Caco-2 (cell line): ENCODE measurements at regions of chr7 and their contacts with region 1.

Region 1: DNA sequence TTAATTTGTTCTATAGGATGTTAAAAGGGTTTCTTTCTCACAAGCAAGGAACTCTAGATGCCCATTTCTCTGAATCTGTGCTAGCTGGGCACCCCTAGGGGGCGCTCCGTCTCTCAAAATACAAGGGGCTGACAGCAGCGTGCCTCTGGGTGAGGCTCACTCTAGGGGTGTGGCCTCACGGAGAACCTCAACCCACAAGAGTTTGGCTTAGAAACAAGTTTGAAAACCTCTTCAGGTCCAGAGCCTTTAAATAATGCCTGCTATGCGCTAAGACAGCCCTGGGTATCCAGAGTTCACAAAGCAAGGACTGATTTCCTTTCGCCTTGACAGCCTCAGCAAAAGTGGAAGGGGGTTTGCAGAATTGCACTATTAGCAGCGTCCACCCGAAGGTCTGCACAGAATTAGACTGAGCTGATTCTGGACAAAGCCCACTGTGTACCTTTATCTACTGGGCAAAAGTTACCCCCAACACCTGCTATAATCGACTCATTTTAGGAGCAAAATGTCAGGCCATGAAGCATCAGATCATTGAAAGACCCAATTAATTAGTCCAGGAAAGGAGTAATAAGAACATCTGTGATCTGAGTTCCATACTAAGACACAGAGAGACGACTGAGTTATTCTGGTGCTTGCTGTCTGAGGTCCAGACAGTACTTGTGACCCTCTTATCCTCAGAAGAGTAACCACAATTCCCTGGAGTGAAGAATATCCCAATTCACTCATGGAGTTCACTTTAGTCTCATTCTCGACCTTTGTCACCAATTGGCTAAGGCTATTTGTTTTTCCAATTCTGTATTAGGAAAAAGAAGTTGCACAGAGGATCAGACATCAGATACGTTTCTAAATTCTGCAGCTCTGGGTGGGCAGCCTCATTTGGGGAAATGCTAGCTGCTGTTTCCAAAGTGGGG is 574 bp upstream of the CPED1 start:
- DNase-seq: peak; percentile 80 to 85
- H3K4me3 ChIP-seq: peak overlapping the region; percentile 20
- H3K4me3 Mint-ChIP-seq: peak overlapping the region; percentile 90
- H3K27ac Mint-ChIP-seq: no peak overlapping the region
- H3K4me1 ChIP-seq: peaks cover 10% of the 10 kb centered on the region
- H3K4me1 Mint-ChIP-seq: peaks cover 16% of the 10 kb centered on the region
- H3K27me3 ChIP-seq: 0 out of 2 replicates have a peak, but pooled peaks cover 2% of the 10 kb centered on the region
- H3K27me3 Mint-ChIP-seq: peaks cover 6% of the 10 kb centered on the region
- CTCF ChIP-seq: peak; percentile 97

Region 2: DNA sequence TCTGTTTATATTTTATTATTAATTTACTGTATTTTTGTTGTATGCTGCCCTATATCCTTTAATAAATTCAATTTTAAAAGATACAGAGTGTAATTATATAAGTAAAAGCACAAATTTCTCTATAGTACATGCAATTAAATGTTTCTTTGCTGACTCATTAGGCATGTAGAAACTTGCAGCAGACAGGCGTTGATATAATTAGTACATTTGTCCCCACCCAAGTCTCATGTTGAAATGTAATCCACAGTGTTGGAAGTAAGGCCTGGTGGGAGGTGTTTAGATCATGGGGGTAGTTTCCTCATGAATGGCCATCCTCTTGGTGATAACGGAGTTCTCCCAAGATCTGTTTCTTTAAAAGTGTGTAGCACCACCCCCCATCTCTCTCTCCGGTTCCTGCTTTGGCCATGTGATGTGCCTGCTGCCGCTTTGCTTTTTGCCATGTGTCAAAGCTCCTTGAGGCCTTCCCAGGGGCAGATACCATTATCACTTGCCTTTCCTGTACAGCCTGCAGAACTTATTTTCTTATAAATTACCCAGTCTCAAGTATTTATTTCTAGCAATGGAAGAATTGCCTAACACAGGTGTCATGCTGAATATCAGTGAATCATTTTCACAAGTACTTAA is 193.7 kb before region 1 on chr7:
- CTCF ChIA-PET with region 1: no interaction called
- POLR2A ChIA-PET with region 1: no interaction called
- intact Hi-C with region 1: no loop called
- DNase-seq: no peak
- H3K4me3 ChIP-seq: no peak overlapping the region
- H3K4me3 Mint-ChIP-seq: no peak overlapping the region
- H3K27ac Mint-ChIP-seq: no peak overlapping the region
- H3K4me1 ChIP-seq: no peaks in the 10 kb centered on the region
- H3K4me1 Mint-ChIP-seq: no peaks in the 10 kb centered on the region
- H3K27me3 ChIP-seq: no peaks in the 10 kb centered on the region
- H3K27me3 Mint-ChIP-seq: peaks cover 4% of the 10 kb centered on the region
- CTCF ChIP-seq: no peak

Region 3: DNA sequence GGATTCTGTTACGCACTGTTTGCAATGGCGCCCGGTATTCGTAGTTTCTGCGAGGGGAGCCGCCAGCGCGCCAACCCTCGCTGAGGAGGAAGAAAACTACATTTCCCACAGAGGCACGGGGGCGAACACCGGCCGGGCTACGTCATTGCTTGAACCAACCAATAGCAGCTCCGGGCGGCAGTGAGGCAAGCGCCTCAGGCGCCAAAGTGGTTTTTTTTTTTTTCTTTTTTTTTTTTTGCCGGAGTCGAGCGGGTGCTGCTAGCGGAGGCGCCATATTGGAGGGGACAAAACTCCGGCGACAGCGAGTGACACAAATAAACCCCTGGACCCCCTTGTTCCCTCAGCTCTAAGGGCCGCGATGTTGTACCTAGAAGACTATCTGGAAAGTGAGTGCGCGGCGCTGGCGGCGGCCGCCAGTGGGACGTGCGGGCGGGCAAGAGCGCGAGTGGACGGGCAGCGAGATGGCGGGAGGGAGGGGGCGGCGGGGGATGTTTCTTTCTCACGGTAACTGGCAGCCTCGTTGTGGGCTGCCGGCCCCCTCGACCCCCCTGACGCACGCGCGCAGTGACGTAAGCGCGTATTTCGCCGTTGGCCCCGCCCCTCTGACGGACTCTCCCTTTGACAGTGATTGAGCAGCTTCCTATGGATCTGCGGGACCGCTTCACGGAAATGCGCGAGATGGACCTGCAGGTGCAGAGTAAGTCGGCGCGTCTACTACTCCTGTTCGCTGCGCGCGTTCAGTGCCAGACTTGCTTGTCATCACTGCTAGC is 37.2 kb before region 1 on chr7 and contains the start of gene ING3:
- CTCF ChIA-PET with region 1: no interaction called
- POLR2A ChIA-PET with region 1: interaction called, 5 read pairs
- intact Hi-C with region 1: loop called (anchors 1 kb)
- DNase-seq: peak; percentile 97
- H3K4me3 ChIP-seq: peak within 1 kb of the TSS; percentile 85
- H3K4me3 Mint-ChIP-seq: peak within 1 kb of the TSS; percentile 96
- H3K27ac Mint-ChIP-seq: peak within 1 kb of the TSS; percentile 100
- H3K4me1 ChIP-seq: no peaks in the 10 kb centered on the region
- H3K4me1 Mint-ChIP-seq: peaks cover 9% of the 10 kb centered on the region
- H3K27me3 ChIP-seq: no peaks in the 10 kb centered on the region; the same call in 1 of the 2 replicates
- H3K27me3 Mint-ChIP-seq: peaks cover 4% of the 10 kb centered on the region
- CTCF ChIP-seq: no peak
- total RNA-seq, gene ING3: 13.7 and 14.6 TPM in 2 replicates

Region 4: GRCh38 chr7:121011401-121011800 is 23.5 kb after region 1 on chr7:
- CTCF ChIA-PET with region 1: interaction called, 3 read pairs
- POLR2A ChIA-PET with region 1: no interaction called
- intact Hi-C with region 1: loop called (anchors 2 kb)
- DNase-seq: no peak
- H3K4me3 ChIP-seq: no peak overlapping the region
- H3K4me3 Mint-ChIP-seq: no peak overlapping the region
- H3K27ac Mint-ChIP-seq: no peak overlapping the region
- H3K4me1 ChIP-seq: no peaks in the 10 kb centered on the region
- H3K4me1 Mint-ChIP-seq: peaks cover 5% of the 10 kb centered on the region
- H3K27me3 ChIP-seq: no peaks in the 10 kb centered on the region
- H3K27me3 Mint-ChIP-seq: no peaks in the 10 kb centered on the region
- CTCF ChIP-seq: no peak

Region 5: DNA sequence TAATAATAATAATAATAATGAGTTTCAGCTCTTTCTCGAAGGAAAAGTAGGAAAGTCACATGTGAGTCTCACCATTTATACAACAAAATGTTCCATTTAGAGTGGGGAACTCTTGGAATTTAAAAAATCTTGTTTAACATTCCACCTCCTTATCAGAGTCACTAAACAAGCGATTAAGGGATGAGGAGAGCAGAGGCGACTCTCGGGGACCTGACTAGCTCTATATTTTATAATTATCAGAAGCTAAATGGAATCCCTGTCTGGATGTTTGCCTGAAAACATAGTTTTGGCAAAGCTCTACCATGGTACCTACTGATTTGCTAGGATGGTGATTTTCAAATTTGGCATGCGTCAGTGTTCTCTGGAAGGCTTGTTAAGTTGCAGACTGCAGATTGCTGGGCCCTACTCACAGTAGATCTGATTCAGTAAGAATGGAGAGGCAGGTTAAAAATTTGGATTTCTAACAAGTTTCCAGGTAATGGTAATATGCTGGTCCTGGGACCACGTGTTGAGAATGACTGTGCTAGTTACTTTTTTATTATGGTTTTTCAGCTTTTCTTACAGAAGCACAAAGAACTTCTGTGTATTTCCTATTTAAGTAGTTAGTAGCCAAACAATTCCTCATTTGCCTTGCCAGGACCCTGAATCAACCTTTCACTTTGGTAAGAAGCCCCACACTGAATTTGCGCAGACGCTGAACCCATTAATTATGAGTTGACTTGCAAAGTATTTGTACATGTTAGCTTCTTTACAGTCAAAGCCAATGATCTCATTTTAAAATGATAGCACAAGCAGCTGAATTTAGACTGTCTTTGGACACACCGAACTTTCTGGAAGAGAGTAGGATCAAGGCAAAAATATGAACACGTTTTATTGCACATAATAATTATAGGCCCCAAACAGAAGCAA is 40.1 kb after region 1 on chr7:
- CTCF ChIA-PET with region 1: interaction called, 3 read pairs
- POLR2A ChIA-PET with region 1: no interaction called
- intact Hi-C with region 1: loop called (anchors 5 kb)
- DNase-seq: peak; percentile 23 to 38
- H3K4me3 ChIP-seq: no peak overlapping the region
- H3K4me3 Mint-ChIP-seq: peak overlapping the region; percentile 43
- H3K27ac Mint-ChIP-seq: peak overlapping the region; percentile 82
- H3K4me1 ChIP-seq: peaks cover 41% of the 10 kb centered on the region
- H3K4me1 Mint-ChIP-seq: peaks cover 27% of the 10 kb centered on the region
- H3K27me3 ChIP-seq: no peaks in the 10 kb centered on the region
- H3K27me3 Mint-ChIP-seq: no peaks in the 10 kb centered on the region
- CTCF ChIP-seq: no peak

Region 6: DNA sequence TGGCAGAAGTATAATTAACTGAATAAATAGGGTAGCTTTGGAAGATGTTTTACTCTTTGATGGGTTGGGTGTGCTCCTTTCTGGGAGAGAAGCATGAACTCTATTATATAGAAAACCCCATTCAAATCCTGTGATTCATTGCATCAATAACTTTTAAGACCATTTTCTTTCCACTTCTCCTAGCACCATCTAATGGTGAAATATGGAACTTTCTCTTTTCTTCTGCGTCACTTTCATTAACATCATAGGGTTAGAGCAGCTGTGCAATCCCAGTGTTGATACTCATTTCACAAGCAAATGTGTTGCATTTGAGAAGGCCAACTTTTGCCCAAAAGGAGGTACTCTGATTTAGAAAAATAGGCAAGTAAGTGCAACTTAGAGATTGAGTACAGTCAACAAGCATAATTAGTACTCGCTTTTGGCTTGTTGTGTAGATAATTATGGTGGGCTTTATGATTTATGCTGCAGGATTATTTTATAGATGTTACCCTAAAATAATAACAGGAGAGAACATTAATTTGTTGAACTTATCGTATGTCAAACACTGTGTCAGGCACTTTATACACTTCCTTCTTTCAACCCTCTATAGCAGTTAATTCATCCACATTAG is 93.5 kb after region 1 on chr7:
- CTCF ChIA-PET with region 1: interaction called, 23 read pairs
- POLR2A ChIA-PET with region 1: no interaction called
- intact Hi-C with region 1: loop called (anchors 1 kb)
- DNase-seq: peak in 1 of 2 experiments; percentile 52
- H3K4me3 ChIP-seq: no peak overlapping the region
- H3K4me3 Mint-ChIP-seq: no peak overlapping the region
- H3K27ac Mint-ChIP-seq: no peak overlapping the region
- H3K4me1 ChIP-seq: peaks cover 5% of the 10 kb centered on the region; the same call in 1 of the 2 replicates
- H3K4me1 Mint-ChIP-seq: peaks cover 7% of the 10 kb centered on the region
- H3K27me3 ChIP-seq: no peaks in the 10 kb centered on the region
- H3K27me3 Mint-ChIP-seq: no peaks in the 10 kb centered on the region
- CTCF ChIP-seq: peak; percentile 62 to 64

Region 7: DNA sequence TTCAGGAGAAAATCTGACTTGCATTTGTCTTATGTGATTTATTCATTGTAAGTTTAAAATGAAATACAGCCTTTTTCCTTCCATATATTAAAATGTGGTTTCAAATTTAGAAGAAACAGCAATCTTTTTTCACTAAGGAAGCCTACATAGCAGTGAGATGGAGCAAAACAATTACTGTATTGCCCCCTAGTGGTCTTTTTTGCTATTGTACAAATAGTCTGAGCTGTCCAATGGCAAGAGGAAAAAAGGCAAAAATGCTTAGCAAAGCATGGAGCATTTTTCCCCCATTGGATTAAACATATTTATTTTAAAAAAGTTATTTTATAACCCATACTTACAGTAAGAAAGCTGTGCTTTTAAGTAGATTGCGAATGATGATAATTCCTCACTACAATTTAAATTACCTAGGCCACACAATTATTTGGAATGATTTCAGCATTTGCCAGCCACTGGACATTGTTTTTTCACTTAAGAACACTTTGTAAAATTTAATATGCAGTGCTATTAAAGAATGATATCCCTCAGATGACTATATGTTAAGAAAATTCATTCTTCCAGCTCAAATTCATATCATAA is 120.1 kb after region 1 on chr7:
- CTCF ChIA-PET with region 1: interaction called, 11 read pairs
- POLR2A ChIA-PET with region 1: no interaction called
- intact Hi-C with region 1: loop called (anchors 1 kb)
- DNase-seq: peak in 1 of 2 experiments; percentile 66
- H3K4me3 ChIP-seq: no peak overlapping the region
- H3K4me3 Mint-ChIP-seq: no peak overlapping the region
- H3K27ac Mint-ChIP-seq: no peak overlapping the region
- H3K4me1 ChIP-seq: peaks cover 7% of the 10 kb centered on the region; the same call in 1 of the 2 replicates
- H3K4me1 Mint-ChIP-seq: peaks cover 7% of the 10 kb centered on the region
- H3K27me3 ChIP-seq: no peaks in the 10 kb centered on the region
- H3K27me3 Mint-ChIP-seq: peaks cover 10% of the 10 kb centered on the region
- CTCF ChIP-seq: peak; percentile 69 to 76